CD8-positive, alpha-beta T cell (primary cell): ENCODE measurements at regions of chr14 and their contacts with region 1.

Region 1: GRCh38 chr14:102096214-102097114 is 9.6 kb upstream of the HSP90AA1 start:
- DNase-seq: peak; percentile 40 to 83 (median 75)
- ATAC-seq: peak; percentile 80
- H3K4me3 ChIP-seq: no peak overlapping the region
- H3K4me3 Mint-ChIP-seq: no peak overlapping the region
- H3K27ac ChIP-seq: no peak overlapping the region
- H3K27ac Mint-ChIP-seq: no peak overlapping the region
- H3K4me1 ChIP-seq: no peaks in the 10 kb centered on the region
- H3K4me1 Mint-ChIP-seq: peaks cover 3% of the 10 kb centered on the region
- H3K27me3 ChIP-seq: no peaks in the 10 kb centered on the region
- H3K27me3 Mint-ChIP-seq: no peaks in the 10 kb centered on the region
- CTCF ChIP-seq: peak; percentile 89

Region 2: DNA sequence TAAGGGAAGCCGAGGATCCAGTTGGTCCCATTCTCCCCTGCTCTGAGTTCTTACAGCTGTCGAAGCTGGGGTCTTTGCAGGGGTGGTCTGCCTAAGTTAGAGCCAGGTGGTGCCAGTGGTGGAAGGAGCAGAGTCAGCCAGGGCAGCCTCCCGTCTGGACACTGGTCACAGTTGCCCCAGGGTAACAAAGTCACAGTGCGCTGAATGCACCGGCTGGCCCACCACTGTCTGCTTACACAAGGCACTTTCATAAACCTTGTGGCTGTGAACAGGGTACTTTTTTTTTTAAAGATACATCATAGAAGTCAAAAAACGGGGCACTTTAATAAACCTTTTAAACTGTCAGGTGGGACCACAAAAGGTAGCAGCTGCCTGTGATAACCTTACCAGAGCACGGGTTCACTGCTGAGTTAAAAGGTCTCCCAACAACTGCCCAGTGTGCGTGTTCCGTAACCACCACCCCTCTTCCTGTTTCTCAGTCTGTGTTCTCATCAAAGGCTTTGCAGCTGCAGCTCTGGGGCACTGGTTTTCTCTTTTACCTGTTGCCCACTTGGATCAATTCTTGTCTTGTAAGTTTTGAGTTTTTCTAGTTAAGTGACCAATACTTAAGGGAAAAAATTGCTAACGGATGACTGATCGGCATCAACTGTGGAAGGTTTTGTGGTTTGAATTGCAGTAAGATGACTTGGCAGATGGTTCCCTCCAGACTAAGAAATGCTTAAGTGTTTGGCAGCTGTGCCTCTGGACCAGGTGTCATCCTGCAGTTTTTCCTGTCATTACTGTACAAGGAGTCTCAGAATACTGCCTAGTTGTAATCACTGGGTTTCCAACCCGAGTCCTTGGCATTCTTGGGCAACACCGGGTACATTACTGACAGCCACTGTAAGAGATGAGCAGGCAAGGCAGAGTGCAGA is 76.1 kb before region 1 on chr14:
- CTCF ChIA-PET with region 1: interaction called, 7 read pairs
- POLR2A ChIA-PET with region 1: no interaction called
- intact Hi-C with region 1: loop called in 1 of 2 experiments (anchors 2 kb)
- DNase-seq: peak; percentile 6 to 80 (median 35)
- ATAC-seq: peak; percentile 90
- H3K4me3 ChIP-seq: no peak overlapping the region
- H3K4me3 Mint-ChIP-seq: peak overlapping the region; percentile 64
- H3K27ac ChIP-seq: peak overlapping the region in 1 of 2 experiments; percentile 54
- H3K27ac Mint-ChIP-seq: peak overlapping the region; percentile 90
- H3K4me1 ChIP-seq: peaks cover 24% of the 10 kb centered on the region
- H3K4me1 Mint-ChIP-seq: peaks cover 19% of the 10 kb centered on the region
- H3K27me3 ChIP-seq: no peaks in the 10 kb centered on the region
- H3K27me3 Mint-ChIP-seq: no peaks in the 10 kb centered on the region
- CTCF ChIP-seq: no peak

Region 3: GRCh38 chr14:102028421-102029172 is 67.9 kb before region 1 on chr14:
- CTCF ChIA-PET with region 1: interaction called, 12 read pairs
- POLR2A ChIA-PET with region 1: no interaction called
- intact Hi-C with region 1: no loop called
- DNase-seq: no peak
- ATAC-seq: no peak
- H3K4me3 ChIP-seq: no peak overlapping the region
- H3K4me3 Mint-ChIP-seq: no peak overlapping the region
- H3K27ac ChIP-seq: no peak overlapping the region
- H3K27ac Mint-ChIP-seq: no peak overlapping the region
- H3K4me1 ChIP-seq: no peaks in the 10 kb centered on the region
- H3K4me1 Mint-ChIP-seq: no peaks in the 10 kb centered on the region
- H3K27me3 ChIP-seq: no peaks in the 10 kb centered on the region
- H3K27me3 Mint-ChIP-seq: no peaks in the 10 kb centered on the region
- CTCF ChIP-seq: no peak

Region 4: GRCh38 chr14:102046343-102047278 is 49.9 kb before region 1 on chr14:
- CTCF ChIA-PET with region 1: interaction called, 28 read pairs
- POLR2A ChIA-PET with region 1: interaction called, 3 read pairs
- intact Hi-C with region 1: loop called (anchors 1 to 10 kb)
- DNase-seq: peak in 5 of 9 experiments; percentile 12 to 55 (median 26)
- ATAC-seq: peak; percentile 54
- H3K4me3 ChIP-seq: no peak overlapping the region
- H3K4me3 Mint-ChIP-seq: no peak overlapping the region
- H3K27ac ChIP-seq: no peak overlapping the region
- H3K27ac Mint-ChIP-seq: no peak overlapping the region
- H3K4me1 ChIP-seq: no peaks in the 10 kb centered on the region
- H3K4me1 Mint-ChIP-seq: no peaks in the 10 kb centered on the region
- H3K27me3 ChIP-seq: no peaks in the 10 kb centered on the region
- H3K27me3 Mint-ChIP-seq: no peaks in the 10 kb centered on the region
- CTCF ChIP-seq: no peak

Region 5: GRCh38 chr14:102063091-102063802 is 33.2 kb before region 1 on chr14:
- CTCF ChIA-PET with region 1: interaction called, 47 read pairs
- POLR2A ChIA-PET with region 1: no interaction called
- intact Hi-C with region 1: loop called (anchors 1 kb)
- DNase-seq: peak; percentile 45 to 86 (median 66)
- ATAC-seq: peak; percentile 95
- H3K4me3 ChIP-seq: no peak overlapping the region
- H3K4me3 Mint-ChIP-seq: no peak overlapping the region
- H3K27ac ChIP-seq: no peak overlapping the region
- H3K27ac Mint-ChIP-seq: no peak overlapping the region
- H3K4me1 ChIP-seq: no peaks in the 10 kb centered on the region
- H3K4me1 Mint-ChIP-seq: peaks cover 12% of the 10 kb centered on the region
- H3K27me3 ChIP-seq: no peaks in the 10 kb centered on the region
- H3K27me3 Mint-ChIP-seq: no peaks in the 10 kb centered on the region
- CTCF ChIP-seq: peak; percentile 32

Region 6: DNA sequence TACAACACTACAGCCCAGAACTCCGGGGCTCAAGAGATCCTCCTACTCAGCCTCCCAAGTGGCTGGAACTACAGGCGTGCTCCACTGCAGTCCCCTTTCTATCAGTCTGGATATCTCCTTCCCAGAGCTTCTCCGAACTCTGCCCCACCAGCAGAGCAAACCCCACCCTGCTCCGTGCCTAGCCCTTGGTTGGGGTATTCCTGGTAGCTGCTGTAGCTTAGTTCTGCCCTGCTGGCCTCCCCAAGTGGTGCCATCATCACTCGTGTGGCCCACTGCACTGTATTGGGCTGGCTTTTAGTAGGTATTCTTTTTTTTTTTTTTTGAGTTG is 19.1 kb before region 1 on chr14:
- CTCF ChIA-PET with region 1: interaction called, 24 read pairs
- POLR2A ChIA-PET with region 1: interaction called, 4 read pairs
- intact Hi-C with region 1: no loop called
- DNase-seq: no peak
- ATAC-seq: no peak
- H3K4me3 ChIP-seq: no peak overlapping the region
- H3K4me3 Mint-ChIP-seq: no peak overlapping the region
- H3K27ac ChIP-seq: no peak overlapping the region
- H3K27ac Mint-ChIP-seq: no peak overlapping the region
- H3K4me1 ChIP-seq: peaks cover 8% of the 10 kb centered on the region
- H3K4me1 Mint-ChIP-seq: peaks cover 25% of the 10 kb centered on the region
- H3K27me3 ChIP-seq: no peaks in the 10 kb centered on the region
- H3K27me3 Mint-ChIP-seq: no peaks in the 10 kb centered on the region
- CTCF ChIP-seq: no peak